Esophagus muscularis mucosa (tissue), 4 donors: ENCODE measurements at regions of chr1 and their contacts with region 1.

Region 1: DNA sequence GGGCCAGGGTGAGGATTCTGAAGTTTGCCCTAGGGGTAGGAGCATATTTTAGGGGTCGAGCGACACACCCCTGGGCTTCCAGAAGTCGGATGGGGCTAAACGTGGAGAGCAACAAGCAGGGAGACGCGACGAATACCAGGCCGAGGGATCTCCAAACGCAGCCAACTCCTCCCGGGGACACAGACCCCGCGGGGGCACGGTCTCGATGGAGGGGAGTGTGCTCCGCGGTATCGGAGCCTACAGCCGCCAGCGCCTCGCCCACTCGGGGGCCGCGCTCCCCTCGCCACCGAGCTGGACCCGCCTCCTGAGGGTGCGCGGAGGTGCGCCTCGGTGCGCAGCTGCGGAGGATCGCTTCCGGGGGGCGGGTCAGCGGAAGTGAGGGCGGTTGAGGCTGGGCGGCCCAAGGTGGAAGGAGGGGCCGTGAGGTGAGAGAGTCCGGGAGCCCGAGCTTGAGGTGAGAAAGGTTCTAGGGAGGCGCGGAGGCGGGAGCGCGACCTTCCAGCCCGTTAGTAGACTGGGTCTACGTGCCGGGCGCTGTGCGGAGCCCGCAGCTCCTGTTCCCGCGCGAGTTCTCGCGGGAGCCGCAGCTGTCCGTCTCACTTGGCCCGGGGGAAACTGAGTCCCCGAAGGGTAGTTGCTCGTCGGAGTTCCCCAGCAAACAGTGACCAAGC is at the start of gene MTFR1L:
- DNase-seq: peak; percentile 95
- H3K4me3 ChIP-seq: peak within 1 kb of the TSS; percentile 80 to 91 (median 89)
- H3K27ac ChIP-seq: peak within 1 kb of the TSS; percentile 89 to 96 (median 92)
- H3K4me1 ChIP-seq: peaks cover 28 to 60% (median 44%) of the 10 kb centered on the region in 4 donors
- H3K27me3 ChIP-seq: no peaks in the 10 kb centered on the region
- CTCF ChIP-seq: peak in 1 of 3 experiments; percentile 14
- EP300 ChIP-seq: no peak
- POLR2A ChIP-seq: peak; percentile 65
- total RNA-seq, gene MTFR1L: 91.1 to 107 (median 101) TPM

Region 2: GRCh38 chr1:25895365-25895993 is 75.8 kb after region 1 on chr1:
- intact Hi-C with region 1: loop called (anchors 5 kb)
- DNase-seq: peak; percentile 95
- H3K4me3 ChIP-seq: peak overlapping the region in 2 of 4 donors; percentile 9 to 17
- H3K27ac ChIP-seq: peak overlapping the region in 2 of 4 donors; percentile 22 to 60
- H3K4me1 ChIP-seq: peaks cover 10 to 38% (median 37%) of the 10 kb centered on the region in 4 donors
- H3K27me3 ChIP-seq: no peaks in the 10 kb centered on the region
- CTCF ChIP-seq: peak; percentile 98 to 99 (median 99)
- EP300 ChIP-seq: no peak
- POLR2A ChIP-seq: no peak